Panc1 (cell line): ENCODE measurements at regions of chr19 and their contacts with region 1.

Region 1: GRCh38 chr19:42244347-42245220 is 2.2 kb upstream of the GSK3A start:
- DNase-seq: peak; percentile 86
- ATAC-seq: peak; percentile 61
- H3K4me3 ChIP-seq: peak overlapping the region; percentile 73 to 80
- H3K27ac ChIP-seq: peak overlapping the region; percentile 92
- H3K4me1 ChIP-seq: peaks cover 27% of the 10 kb centered on the region
- H3K27me3 ChIP-seq: no peaks in the 10 kb centered on the region
- CTCF ChIP-seq: peak; percentile 79

Region 2: GRCh38 chr19:42283143-42284065 is 38.8 kb after region 1 on chr19:
- CTCF ChIA-PET with region 1: interaction called, 38 read pairs
- POLR2A ChIA-PET with region 1: no interaction called
- in situ Hi-C with region 1: no loop called
- intact Hi-C with region 1: loop called (anchors 5 kb)
- DNase-seq: no peak
- ATAC-seq: peak; percentile 62
- H3K4me3 ChIP-seq: peak overlapping the region; percentile 45 to 56
- H3K27ac ChIP-seq: peak overlapping the region; percentile 67
- H3K4me1 ChIP-seq: peaks cover 42% of the 10 kb centered on the region
- H3K27me3 ChIP-seq: no peaks in the 10 kb centered on the region
- CTCF ChIP-seq: no peak

Region 3: DNA sequence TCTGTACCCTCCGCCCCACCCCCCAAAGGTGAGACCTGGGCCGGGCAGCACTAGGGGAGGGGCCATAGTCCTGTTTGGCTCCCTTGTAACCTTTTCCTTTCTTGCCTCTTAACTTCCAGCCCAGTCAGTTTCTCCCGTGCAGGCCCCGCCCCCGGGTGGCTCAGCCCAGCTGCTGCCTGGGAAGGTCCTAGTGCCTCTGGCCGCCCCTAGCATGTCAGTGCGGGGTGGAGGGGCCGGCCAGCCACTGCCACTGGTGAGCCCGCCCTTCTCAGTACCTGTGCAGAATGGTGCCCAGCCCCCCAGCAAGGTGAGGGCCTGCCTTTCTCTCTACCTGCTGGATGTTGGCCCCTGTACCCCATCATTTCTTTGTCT is 46.8 kb after region 1 on chr19:
- CTCF ChIA-PET with region 1: interaction called, 13 read pairs
- POLR2A ChIA-PET with region 1: interaction called, 6 read pairs
- in situ Hi-C with region 1: no loop called
- intact Hi-C with region 1: no loop called
- DNase-seq: no peak
- ATAC-seq: peak; percentile 26; the same call in 1 of the 2 replicates
- H3K4me3 ChIP-seq: no peak overlapping the region
- H3K27ac ChIP-seq: no peak overlapping the region
- H3K4me1 ChIP-seq: no peaks in the 10 kb centered on the region
- H3K27me3 ChIP-seq: no peaks in the 10 kb centered on the region
- CTCF ChIP-seq: no peak

Region 4: GRCh38 chr19:42450314-42450934 is 205.8 kb after region 1 on chr19:
- CTCF ChIA-PET with region 1: no interaction called
- POLR2A ChIA-PET with region 1: no interaction called
- in situ Hi-C with region 1: no loop called
- intact Hi-C with region 1: no loop called
- DNase-seq: no peak
- ATAC-seq: peak; percentile 83
- H3K4me3 ChIP-seq: no peak overlapping the region
- H3K27ac ChIP-seq: no peak overlapping the region
- H3K4me1 ChIP-seq: no peaks in the 10 kb centered on the region
- H3K27me3 ChIP-seq: no peaks in the 10 kb centered on the region
- CTCF ChIP-seq: peak; percentile 85